ENCODE measurements at regions of chr10 and their contacts with region 1.

Region 1: GRCh38 chr10:54985732-54986131 is 184.7 kb upstream of the PCDH15 start:
- DNase-seq: peak in 1 of 2 experiments; percentile 33
- H3K4me3 ChIP-seq: no peak overlapping the region
- H3K4me3 Mint-ChIP-seq: no peak overlapping the region
- H3K27ac Mint-ChIP-seq: no peak overlapping the region
- H3K4me1 ChIP-seq: no peaks in the 10 kb centered on the region
- H3K4me1 Mint-ChIP-seq: no peaks in the 10 kb centered on the region
- H3K27me3 ChIP-seq: no peaks in the 10 kb centered on the region
- H3K27me3 Mint-ChIP-seq: no peaks in the 10 kb centered on the region
- CTCF ChIP-seq: peak; percentile 56 to 64

Region 2: GRCh38 chr10:54772468-54773122 is 213.1 kb before region 1 on chr10:
- CTCF ChIA-PET with region 1: no interaction called
- POLR2A ChIA-PET with region 1: no interaction called
- intact Hi-C with region 1: no loop called
- DNase-seq: no peak
- H3K4me3 ChIP-seq: no peak overlapping the region
- H3K4me3 Mint-ChIP-seq: no peak overlapping the region
- H3K27ac Mint-ChIP-seq: no peak overlapping the region
- H3K4me1 ChIP-seq: no peaks in the 10 kb centered on the region
- H3K4me1 Mint-ChIP-seq: no peaks in the 10 kb centered on the region
- H3K27me3 ChIP-seq: no peaks in the 10 kb centered on the region
- H3K27me3 Mint-ChIP-seq: peaks cover 2% of the 10 kb centered on the region
- CTCF ChIP-seq: no peak

Region 3: DNA sequence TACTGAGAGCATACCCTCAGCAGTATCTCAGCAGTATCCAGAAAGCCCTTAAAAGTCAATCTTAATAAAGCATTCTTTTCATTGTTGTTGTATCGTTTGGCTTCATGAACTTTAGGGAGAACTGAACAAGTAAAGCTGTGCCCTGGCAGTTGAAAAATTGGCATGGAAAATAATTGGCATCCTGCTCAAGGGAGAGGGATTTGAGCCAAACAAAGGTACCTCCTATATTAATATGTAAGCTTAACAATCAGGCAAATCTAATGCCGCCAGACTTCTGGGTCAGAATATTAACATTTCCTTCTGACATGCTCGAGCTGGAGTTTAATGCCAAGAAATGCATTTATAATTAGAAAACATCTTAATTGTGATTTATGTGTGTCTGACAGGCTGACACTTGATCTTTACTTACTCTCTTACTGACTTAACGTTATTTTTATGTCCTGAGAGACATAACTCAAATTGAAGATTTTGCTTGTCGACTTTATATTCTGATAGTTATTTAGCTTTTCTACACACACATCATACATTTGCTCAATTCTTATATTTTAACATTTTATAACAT is 142.6 kb before region 1 on chr10:
- CTCF ChIA-PET with region 1: no interaction called
- POLR2A ChIA-PET with region 1: no interaction called
- intact Hi-C with region 1: no loop called
- DNase-seq: no peak
- H3K4me3 ChIP-seq: no peak overlapping the region
- H3K4me3 Mint-ChIP-seq: no peak overlapping the region
- H3K27ac Mint-ChIP-seq: no peak overlapping the region
- H3K4me1 ChIP-seq: no peaks in the 10 kb centered on the region
- H3K4me1 Mint-ChIP-seq: no peaks in the 10 kb centered on the region
- H3K27me3 ChIP-seq: no peaks in the 10 kb centered on the region
- H3K27me3 Mint-ChIP-seq: peaks cover 6% of the 10 kb centered on the region
- CTCF ChIP-seq: no peak

Region 4: GRCh38 chr10:55065185-55065584 is 79.5 kb after region 1 on chr10:
- CTCF ChIA-PET with region 1: no interaction called
- POLR2A ChIA-PET with region 1: no interaction called
- intact Hi-C with region 1: loop called (anchors 5 kb)
- DNase-seq: peak in 1 of 2 experiments; percentile 70
- H3K4me3 ChIP-seq: no peak overlapping the region
- H3K4me3 Mint-ChIP-seq: peak overlapping the region; percentile 0
- H3K27ac Mint-ChIP-seq: peak overlapping the region; percentile 38
- H3K4me1 ChIP-seq: peaks cover 27% of the 10 kb centered on the region
- H3K4me1 Mint-ChIP-seq: peaks cover 7% of the 10 kb centered on the region
- H3K27me3 ChIP-seq: no peaks in the 10 kb centered on the region
- H3K27me3 Mint-ChIP-seq: no peaks in the 10 kb centered on the region
- CTCF ChIP-seq: no peak

Region 5: DNA sequence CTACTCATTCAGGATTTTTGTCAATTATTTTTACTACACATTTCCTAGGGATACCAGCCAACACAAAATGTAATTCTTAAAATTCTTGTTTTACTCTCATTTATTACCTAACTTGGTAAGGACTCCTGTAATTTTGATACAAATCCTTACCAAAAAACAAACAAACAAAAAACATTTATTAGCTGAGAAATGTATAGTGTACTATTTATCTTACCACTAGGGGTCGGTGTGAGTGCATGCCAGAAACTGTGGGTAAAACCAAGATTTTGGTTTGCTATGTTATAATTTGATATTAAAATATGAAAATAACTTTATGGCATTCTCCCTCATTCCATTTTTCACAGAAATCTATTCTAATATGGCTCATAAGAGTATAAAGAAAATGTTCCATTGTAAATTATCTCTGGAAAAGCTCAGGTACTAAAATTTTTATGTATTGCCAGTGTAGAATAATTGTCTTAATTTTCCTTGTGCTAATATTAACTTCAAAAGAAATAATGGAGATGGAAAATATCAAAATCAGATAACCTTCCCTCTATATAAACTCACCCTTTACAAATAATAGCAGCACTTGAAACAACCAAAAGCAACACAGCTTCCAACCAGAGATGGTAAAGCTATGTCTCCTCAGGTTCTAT is 106.1 kb after region 1 on chr10:
- CTCF ChIA-PET with region 1: no interaction called
- POLR2A ChIA-PET with region 1: no interaction called
- intact Hi-C with region 1: loop called (anchors 5 kb)
- DNase-seq: peak in 1 of 2 experiments; percentile 26
- H3K4me3 ChIP-seq: no peak overlapping the region
- H3K4me3 Mint-ChIP-seq: no peak overlapping the region
- H3K27ac Mint-ChIP-seq: no peak overlapping the region
- H3K4me1 ChIP-seq: no peaks in the 10 kb centered on the region
- H3K4me1 Mint-ChIP-seq: no peaks in the 10 kb centered on the region
- H3K27me3 ChIP-seq: no peaks in the 10 kb centered on the region
- H3K27me3 Mint-ChIP-seq: no peaks in the 10 kb centered on the region
- CTCF ChIP-seq: peak; percentile 87 to 93

Region 6: DNA sequence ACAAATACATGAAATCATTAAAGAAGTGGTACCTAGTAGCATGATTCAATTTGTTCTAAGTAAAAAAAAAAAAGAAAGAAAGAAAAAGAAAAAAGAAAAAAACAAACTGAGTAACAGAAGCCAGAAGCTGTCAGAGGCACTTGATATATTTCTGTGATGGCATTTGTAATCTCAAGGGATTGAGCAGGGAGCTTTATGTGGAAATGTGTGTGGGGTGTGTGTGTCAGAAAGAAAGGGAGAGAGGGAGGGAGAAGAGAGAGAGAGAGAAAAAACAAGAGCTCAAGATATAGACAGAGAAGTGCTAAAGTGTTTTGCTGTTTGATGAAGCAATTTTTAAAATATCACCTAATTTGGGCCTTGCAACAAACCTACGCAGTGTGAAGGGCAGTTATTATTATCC is 172.9 kb after region 1 on chr10:
- CTCF ChIA-PET with region 1: no interaction called
- POLR2A ChIA-PET with region 1: no interaction called
- intact Hi-C with region 1: loop called (anchors 1 kb)
- DNase-seq: no peak
- H3K4me3 ChIP-seq: no peak overlapping the region
- H3K4me3 Mint-ChIP-seq: no peak overlapping the region
- H3K27ac Mint-ChIP-seq: no peak overlapping the region
- H3K4me1 ChIP-seq: no peaks in the 10 kb centered on the region
- H3K4me1 Mint-ChIP-seq: no peaks in the 10 kb centered on the region
- H3K27me3 ChIP-seq: no peaks in the 10 kb centered on the region
- H3K27me3 Mint-ChIP-seq: peaks cover 2% of the 10 kb centered on the region
- CTCF ChIP-seq: no peak

Region 7: GRCh38 chr10:55263327-55263726 is 277.6 kb after region 1 on chr10:
- CTCF ChIA-PET with region 1: no interaction called
- POLR2A ChIA-PET with region 1: no interaction called
- intact Hi-C with region 1: loop called (anchors 1 kb)
- DNase-seq: no peak
- H3K4me3 ChIP-seq: no peak overlapping the region
- H3K4me3 Mint-ChIP-seq: no peak overlapping the region
- H3K27ac Mint-ChIP-seq: no peak overlapping the region
- H3K4me1 ChIP-seq: no peaks in the 10 kb centered on the region
- H3K4me1 Mint-ChIP-seq: no peaks in the 10 kb centered on the region
- H3K27me3 ChIP-seq: no peaks in the 10 kb centered on the region
- H3K27me3 Mint-ChIP-seq: peaks cover 9% of the 10 kb centered on the region
- CTCF ChIP-seq: peak in 1 of 2 experiments; percentile 0

Region 8: DNA sequence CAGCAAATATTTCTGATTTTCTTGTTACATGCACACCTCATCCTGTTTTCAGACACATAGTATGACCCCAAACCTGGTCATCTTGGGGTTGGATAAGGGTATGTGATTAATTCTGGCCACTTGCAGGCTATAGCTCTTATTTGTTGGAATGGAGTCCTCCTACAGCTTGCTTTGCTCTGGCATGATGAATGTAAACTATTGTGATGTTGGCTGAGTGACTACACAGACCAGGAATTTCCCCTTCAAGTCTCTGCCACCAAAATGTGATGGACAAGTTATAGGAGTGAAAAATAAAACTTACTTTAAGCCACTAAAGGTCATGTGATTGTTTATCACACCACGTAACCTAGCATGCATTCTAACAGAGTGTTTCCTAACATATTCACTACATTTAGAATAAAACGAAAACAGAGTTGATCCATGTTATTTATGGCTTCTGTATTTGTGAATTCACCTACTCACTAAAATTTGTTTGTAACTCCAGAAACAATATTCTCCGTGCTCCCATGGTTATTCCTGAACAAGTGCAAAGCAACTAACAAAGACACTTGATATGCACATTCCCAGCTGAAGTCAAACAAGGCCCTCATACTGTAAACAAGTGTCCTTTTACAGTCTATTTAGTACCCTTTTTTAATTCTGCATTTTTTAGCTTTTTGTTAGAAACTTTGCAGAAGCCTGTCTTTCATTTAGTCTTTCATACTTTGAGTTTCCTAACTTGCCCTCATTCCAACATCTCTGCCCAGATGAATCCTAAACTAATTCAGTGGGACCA is 414.5 kb after region 1 on chr10:
- CTCF ChIA-PET with region 1: no interaction called
- POLR2A ChIA-PET with region 1: no interaction called
- intact Hi-C with region 1: loop called (anchors 10 kb)
- DNase-seq: no peak
- H3K4me3 ChIP-seq: no peak overlapping the region
- H3K4me3 Mint-ChIP-seq: no peak overlapping the region
- H3K27ac Mint-ChIP-seq: no peak overlapping the region
- H3K4me1 ChIP-seq: no peaks in the 10 kb centered on the region
- H3K4me1 Mint-ChIP-seq: no peaks in the 10 kb centered on the region
- H3K27me3 ChIP-seq: no peaks in the 10 kb centered on the region
- H3K27me3 Mint-ChIP-seq: no peaks in the 10 kb centered on the region
- CTCF ChIP-seq: no peak

Region 9: DNA sequence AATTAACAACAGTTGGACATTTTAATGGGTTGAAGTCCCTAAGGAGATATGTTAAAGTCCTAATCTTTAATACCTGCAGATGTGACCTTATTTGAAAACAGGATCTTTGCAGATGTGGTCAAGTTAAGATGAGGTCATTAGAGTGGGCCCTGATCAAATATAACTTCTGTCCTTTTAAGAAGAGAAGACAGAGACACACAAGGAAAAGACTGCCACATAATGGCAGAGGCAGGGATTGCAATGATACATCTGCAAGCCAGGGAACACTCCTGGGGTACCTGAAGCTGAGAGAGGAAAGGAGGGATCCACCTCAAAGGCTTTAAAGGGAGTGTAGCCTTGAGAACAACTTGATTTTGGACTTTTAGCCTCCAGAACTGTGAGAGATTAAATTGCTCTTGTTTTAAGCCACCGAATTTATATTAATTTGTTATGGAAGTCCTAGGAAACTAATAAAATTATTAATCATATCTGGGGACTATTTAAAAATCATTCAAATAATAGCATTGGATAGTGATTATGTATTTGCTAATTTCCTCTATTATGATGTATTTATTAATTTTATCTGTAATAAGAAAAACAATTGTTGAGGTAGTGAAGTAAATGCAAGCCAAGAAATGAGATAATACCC is 515.3 kb after region 1 on chr10:
- CTCF ChIA-PET with region 1: no interaction called
- POLR2A ChIA-PET with region 1: no interaction called
- intact Hi-C with region 1: loop called (anchors 1 kb)
- DNase-seq: peak; percentile 69 to 74
- H3K4me3 ChIP-seq: no peak overlapping the region
- H3K4me3 Mint-ChIP-seq: no peak overlapping the region
- H3K27ac Mint-ChIP-seq: no peak overlapping the region
- H3K4me1 ChIP-seq: no peaks in the 10 kb centered on the region
- H3K4me1 Mint-ChIP-seq: no peaks in the 10 kb centered on the region
- H3K27me3 ChIP-seq: no peaks in the 10 kb centered on the region
- H3K27me3 Mint-ChIP-seq: no peaks in the 10 kb centered on the region
- CTCF ChIP-seq: peak; percentile 77 to 82